SK-N-SH (cell line): ENCODE measurements at regions of chr10 and their contacts with region 1.

Region 1: DNA sequence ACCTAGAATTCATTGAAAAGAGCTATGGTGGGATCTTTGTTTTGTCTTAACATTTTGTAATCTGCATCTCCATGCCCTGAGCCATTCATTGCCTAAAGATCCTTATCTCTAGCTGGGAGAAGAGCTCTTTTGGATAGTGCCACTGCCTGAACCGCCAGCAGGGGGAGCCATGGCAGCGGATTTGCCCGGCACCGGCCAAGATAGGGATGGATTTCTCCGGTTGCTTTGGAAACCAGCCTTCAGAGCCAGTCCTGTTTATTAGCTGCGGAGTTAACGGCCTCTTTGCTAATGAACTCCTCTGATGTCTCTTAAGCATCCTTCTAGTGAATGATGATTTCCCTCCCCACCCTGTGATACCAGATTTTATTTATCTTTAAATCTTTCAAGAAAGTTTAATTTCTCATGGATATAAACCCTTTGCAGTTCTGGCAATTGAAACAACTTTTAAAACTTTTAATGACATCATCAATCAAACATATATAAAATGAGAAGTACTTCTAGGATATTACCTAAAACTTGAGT is 58.2 kb upstream of the LYZL2 start:
- DNase-seq: peak; percentile 79
- H3K4me3 ChIP-seq: peak overlapping the region in 1 of 2 experiments; percentile 23; a peak in 1 of 4 replicates
- H3K27ac ChIP-seq: no peak overlapping the region
- H3K4me1 ChIP-seq: no peaks in the 10 kb centered on the region; a peak in 1 of 4 replicates
- H3K27me3 ChIP-seq: no peaks in the 10 kb centered on the region; the same call in 1 of the 2 replicates
- CTCF ChIP-seq: peak; percentile 92
- EP300 ChIP-seq: no peak
- RAD21 ChIP-seq: peak; percentile 85

Region 2: GRCh38 chr10:30671026-30671616 is 16.6 kb before region 1 on chr10:
- CTCF ChIA-PET with region 1: interaction called, 24 read pairs
- POLR2A ChIA-PET with region 1: no interaction called
- DNase-seq: peak; percentile 55
- H3K4me3 ChIP-seq: peak overlapping the region; percentile 14 to 27; a peak in 2 of 4 replicates
- H3K27ac ChIP-seq: no peak overlapping the region
- H3K4me1 ChIP-seq: peaks cover 0 to 5% of the 10 kb centered on the region in 2 experiments; a peak in 1 of 4 replicates
- H3K27me3 ChIP-seq: no peaks in the 10 kb centered on the region
- CTCF ChIP-seq: peak; percentile 77
- EP300 ChIP-seq: no peak
- RAD21 ChIP-seq: peak; percentile 60

Region 3: GRCh38 chr10:30701451-30702173 is 13.9 kb after region 1 on chr10:
- CTCF ChIA-PET with region 1: interaction called, 16 read pairs
- POLR2A ChIA-PET with region 1: no interaction called
- DNase-seq: peak; percentile 48
- H3K4me3 ChIP-seq: no peak overlapping the region
- H3K27ac ChIP-seq: peak overlapping the region in 1 of 2 experiments; percentile 72; a peak in 2 of 4 replicates
- H3K4me1 ChIP-seq: peaks cover 6 to 16% of the 10 kb centered on the region in 2 experiments; a peak in 3 of 4 replicates
- H3K27me3 ChIP-seq: no peaks in the 10 kb centered on the region
- CTCF ChIP-seq: no peak
- EP300 ChIP-seq: no peak
- RAD21 ChIP-seq: no peak

Region 4: GRCh38 chr10:30751678-30752331 is 64.0 kb after region 1 on chr10:
- CTCF ChIA-PET with region 1: interaction called, 12 read pairs
- POLR2A ChIA-PET with region 1: no interaction called
- DNase-seq: peak; percentile 67
- H3K4me3 ChIP-seq: no peak overlapping the region; a peak in 1 of 4 replicates
- H3K27ac ChIP-seq: peak overlapping the region in 1 of 2 experiments; percentile 64; a peak in 2 of 4 replicates
- H3K4me1 ChIP-seq: peaks cover 0 to 30% of the 10 kb centered on the region in 2 experiments; a peak in 1 of 4 replicates
- H3K27me3 ChIP-seq: no peaks in the 10 kb centered on the region
- CTCF ChIP-seq: peak; percentile 79
- EP300 ChIP-seq: no peak
- RAD21 ChIP-seq: peak; percentile 86